Activated CD4-positive, alpha-beta T cell treated with anti-CD3 and anti-CD28 coated beads, Interleukin-2, amount 10 ng/mL, durations not matched to agents 24 days and 14 days (primary cell): ENCODE measurements at regions of chr1 and their contacts with region 1.

Region 1: GRCh38 chr1:58515794-58516401 is 30.6 kb downstream of the OMA1 start:
- DNase-seq: peak; percentile 78
- H3K4me3 Mint-ChIP-seq: no peak overlapping the region
- H3K27ac Mint-ChIP-seq: peak overlapping the region; percentile 22
- H3K4me1 Mint-ChIP-seq: peaks cover 9% of the 10 kb centered on the region
- H3K27me3 Mint-ChIP-seq: no peaks in the 10 kb centered on the region

Region 2: DNA sequence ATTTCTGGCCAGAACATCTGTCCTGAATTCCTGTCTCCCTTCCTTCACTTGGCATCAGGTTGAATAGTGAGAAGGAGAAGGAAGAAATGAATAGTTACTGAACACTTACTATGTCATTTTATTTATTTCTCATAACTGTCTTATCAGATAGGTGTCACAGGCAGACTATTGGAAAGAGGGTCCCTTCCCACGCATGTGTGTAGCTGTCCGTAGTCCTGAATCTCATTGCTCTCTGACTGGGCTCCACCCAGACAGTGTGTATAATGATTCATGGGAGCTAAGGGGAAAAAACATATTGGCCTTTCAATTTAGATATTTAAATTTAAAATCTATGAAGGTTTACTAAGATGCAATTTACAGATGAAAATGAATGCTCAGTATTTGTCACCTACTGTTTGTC is 55.4 kb before region 1 on chr1:
- intact Hi-C with region 1: no loop called
- DNase-seq: no peak
- H3K4me3 Mint-ChIP-seq: no peak overlapping the region
- H3K27ac Mint-ChIP-seq: no peak overlapping the region
- H3K4me1 Mint-ChIP-seq: no peaks in the 10 kb centered on the region
- H3K27me3 Mint-ChIP-seq: no peaks in the 10 kb centered on the region

Region 3: DNA sequence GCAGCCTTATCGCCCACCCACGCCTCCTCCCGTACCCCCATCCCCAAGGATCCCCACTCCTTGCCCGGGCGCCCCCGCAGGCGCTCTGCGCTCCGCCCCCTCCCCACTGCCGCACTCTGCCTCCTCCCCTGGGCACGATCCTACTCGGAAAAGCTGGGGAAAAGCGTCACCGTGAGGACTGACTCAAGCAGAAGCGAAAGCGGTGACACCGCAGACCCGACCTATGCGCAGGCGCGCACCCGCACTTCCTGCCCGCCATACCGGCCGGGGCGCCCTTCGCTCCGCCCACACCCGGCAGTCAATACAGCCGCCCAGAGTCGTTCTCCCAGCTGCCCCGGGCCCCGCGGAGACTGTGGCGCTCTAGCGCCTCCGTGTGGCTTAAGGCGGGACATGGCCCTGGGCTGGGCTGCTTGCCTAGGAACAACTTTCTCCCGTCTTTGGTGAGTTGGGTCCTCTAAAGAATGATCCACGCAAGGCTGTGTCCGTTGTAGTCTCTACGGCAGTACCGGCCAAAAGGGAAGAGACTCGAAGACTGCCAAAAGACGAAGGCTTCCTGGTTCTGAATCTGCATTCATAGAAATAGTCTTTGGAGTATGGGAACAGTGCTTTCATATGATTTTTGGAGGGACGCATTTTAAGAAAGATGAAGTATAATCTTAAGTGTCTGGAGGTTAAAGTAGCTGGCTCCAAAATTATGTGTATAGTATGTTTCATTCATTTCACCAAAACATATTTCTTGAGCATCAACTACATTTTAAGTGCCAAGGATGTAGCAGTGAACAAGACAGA is 30.8 kb after region 1 on chr1 and contains the start of gene OMA1:
- intact Hi-C with region 1: loop called (anchors 1 kb)
- DNase-seq: peak; percentile 99
- H3K4me3 Mint-ChIP-seq: peak within 1 kb of the TSS; percentile 90
- H3K27ac Mint-ChIP-seq: peak within 1 kb of the TSS; percentile 92
- H3K4me1 Mint-ChIP-seq: peaks cover 22% of the 10 kb centered on the region
- H3K27me3 Mint-ChIP-seq: peaks cover 12% of the 10 kb centered on the region
- total RNA-seq, gene OMA1: 10.6 and 13.8 TPM in 2 replicates

Region 4: DNA sequence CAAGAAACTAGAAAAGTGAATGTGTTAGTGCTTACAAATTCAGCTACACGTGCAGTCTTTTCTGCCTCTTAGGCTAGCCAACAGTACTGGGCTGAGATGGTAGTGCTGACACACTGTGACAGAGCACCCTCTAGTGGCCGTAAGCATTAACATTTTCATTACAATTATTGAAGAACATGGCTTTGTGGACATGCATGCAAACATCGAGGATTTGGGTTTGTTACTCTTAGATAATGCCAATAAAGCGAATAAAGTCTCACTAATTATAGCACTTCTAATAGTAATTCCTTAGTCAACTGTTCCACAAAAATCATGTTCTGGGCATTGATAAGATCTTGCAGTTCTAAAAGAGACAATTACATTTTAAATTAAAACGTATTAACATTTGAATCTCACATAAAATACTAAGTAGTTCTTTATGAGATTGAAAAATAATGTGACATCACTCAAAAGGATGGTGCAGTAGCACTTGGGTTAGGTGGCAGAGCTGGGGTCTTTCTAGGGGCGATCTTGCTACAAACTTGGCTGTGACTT is 136.8 kb after region 1 on chr1:
- intact Hi-C with region 1: loop called (anchors 1 kb)
- DNase-seq: peak; percentile 88
- H3K4me3 Mint-ChIP-seq: no peak overlapping the region
- H3K27ac Mint-ChIP-seq: no peak overlapping the region
- H3K4me1 Mint-ChIP-seq: peaks cover 13% of the 10 kb centered on the region
- H3K27me3 Mint-ChIP-seq: no peaks in the 10 kb centered on the region

Region 5: GRCh38 chr1:59699227-59699847 is 1183.4 kb after region 1 on chr1:
- intact Hi-C with region 1: loop called (anchors 2 kb)
- DNase-seq: peak; percentile 80
- H3K4me3 Mint-ChIP-seq: no peak overlapping the region
- H3K27ac Mint-ChIP-seq: no peak overlapping the region
- H3K4me1 Mint-ChIP-seq: peaks cover 26% of the 10 kb centered on the region
- H3K27me3 Mint-ChIP-seq: peaks cover 2% of the 10 kb centered on the region

Region 6: GRCh38 chr1:59759156-59759925 is 1243.4 kb after region 1 on chr1:
- intact Hi-C with region 1: loop called (anchors 2 kb)
- DNase-seq: peak; percentile 92
- H3K4me3 Mint-ChIP-seq: peak overlapping the region; percentile 40
- H3K27ac Mint-ChIP-seq: no peak overlapping the region
- H3K4me1 Mint-ChIP-seq: peaks cover 4% of the 10 kb centered on the region
- H3K27me3 Mint-ChIP-seq: no peaks in the 10 kb centered on the region

Region 7: DNA sequence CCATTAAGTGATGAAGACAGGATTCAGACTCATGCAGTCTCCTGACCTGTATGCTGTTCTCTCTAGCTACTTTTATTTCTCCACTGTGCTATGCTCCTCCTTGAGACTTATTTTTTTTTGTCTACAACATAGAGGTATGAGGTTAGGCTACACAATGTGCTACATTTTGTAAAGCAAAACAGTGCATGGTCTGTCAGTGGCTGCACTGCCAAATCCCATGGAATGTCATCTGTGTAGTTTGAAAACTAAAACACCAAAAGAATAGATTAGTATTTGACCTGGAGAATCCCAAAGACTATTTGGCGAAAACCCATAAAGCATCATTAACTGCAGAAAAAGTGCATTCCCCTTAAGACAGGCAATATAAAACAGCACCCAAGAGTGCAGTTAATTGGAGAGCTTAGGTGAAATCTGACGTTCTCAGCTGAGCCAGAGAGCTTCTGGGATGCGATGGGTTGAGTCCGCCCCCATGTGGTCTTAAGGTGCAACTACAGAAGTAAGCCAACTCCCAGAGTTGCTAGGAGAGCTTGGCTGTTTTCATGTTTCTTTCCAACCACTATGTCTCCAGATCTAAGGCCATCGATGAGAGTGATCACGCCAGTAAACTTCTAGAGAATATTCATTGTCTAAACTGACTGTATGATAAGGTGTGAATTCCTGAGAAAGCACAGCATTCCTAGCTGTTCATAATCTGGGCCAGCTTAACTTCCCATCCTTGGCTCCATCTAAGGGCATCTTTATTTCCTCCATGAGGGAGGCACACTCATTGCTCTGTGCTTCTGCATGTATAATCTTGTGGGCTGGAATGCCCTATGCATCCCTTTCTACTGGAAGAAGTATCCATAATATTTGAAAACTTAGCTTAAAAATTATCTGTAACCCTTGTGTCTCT is 1431.4 kb after region 1 on chr1:
- intact Hi-C with region 1: loop called (anchors 5 kb)
- DNase-seq: peak; percentile 83
- H3K4me3 Mint-ChIP-seq: no peak overlapping the region
- H3K27ac Mint-ChIP-seq: no peak overlapping the region
- H3K4me1 Mint-ChIP-seq: no peaks in the 10 kb centered on the region
- H3K27me3 Mint-ChIP-seq: peaks cover 8% of the 10 kb centered on the region